ENCODE measurements at regions of chr18 and their contacts with region 1.

Region 1: GRCh38 chr18:77000527-77000926 is 132.1 kb downstream of the MBP start:
- DNase-seq: peak; percentile 71
- H3K4me3 ChIP-seq: no peak overlapping the region
- H3K27ac ChIP-seq: peak overlapping the region in 1 of 2 donors; percentile 32
- H3K4me1 ChIP-seq: no peaks in the 10 kb centered on the region
- H3K27me3 ChIP-seq: no peaks in the 10 kb centered on the region
- CTCF ChIP-seq: peak; percentile 88 to 96 (median 95)
- POLR2A ChIP-seq: no peak

Region 2: GRCh38 chr18:76783759-76784484 is 216.6 kb before region 1 on chr18:
- intact Hi-C with region 1: no loop called
- DNase-seq: no peak
- H3K4me3 ChIP-seq: no peak overlapping the region
- H3K27ac ChIP-seq: no peak overlapping the region
- H3K4me1 ChIP-seq: no peaks in the 10 kb centered on the region
- H3K27me3 ChIP-seq: no peaks in the 10 kb centered on the region
- CTCF ChIP-seq: no peak
- POLR2A ChIP-seq: no peak

Region 3: DNA sequence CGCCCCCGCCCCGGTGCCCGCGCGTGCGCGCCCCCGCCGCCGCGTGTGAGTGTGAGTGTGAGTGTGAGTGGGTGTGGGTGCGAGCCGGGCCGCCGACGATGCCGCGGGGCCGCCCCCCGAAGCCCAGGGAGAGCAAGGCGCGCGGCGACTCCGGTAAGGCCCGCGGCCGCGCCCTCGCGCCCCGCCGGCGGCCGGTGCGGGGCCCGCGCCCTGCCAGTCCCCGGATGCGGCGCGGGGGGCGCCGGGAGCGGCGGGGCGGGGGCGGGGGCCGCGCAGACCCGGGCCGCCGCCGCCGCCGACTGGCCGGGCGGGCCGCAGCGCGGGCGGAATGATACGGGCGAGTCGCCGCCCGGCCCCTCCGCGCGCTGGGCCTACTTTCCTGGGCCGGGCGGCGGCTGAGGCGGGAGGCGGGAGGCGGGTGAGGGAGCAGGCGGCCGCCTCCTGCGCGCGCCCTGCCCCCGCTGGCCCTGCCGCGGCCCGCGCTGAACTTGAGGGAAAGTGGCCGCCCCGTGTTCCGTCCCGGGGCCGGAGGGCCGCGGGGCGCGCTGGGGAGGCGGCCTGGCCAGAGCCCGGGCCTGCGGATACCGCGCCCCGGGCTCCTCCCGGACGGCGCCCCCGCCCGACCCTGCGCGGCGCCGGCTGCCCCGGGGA is 177.9 kb before region 1 on chr18 and contains the start of gene ZNF236:
- intact Hi-C with region 1: no loop called
- DNase-seq: peak; percentile 71
- H3K4me3 ChIP-seq: peak within 1 kb of the TSS; percentile 87 to 90
- H3K27ac ChIP-seq: peak within 1 kb of the TSS; percentile 93 to 96
- H3K4me1 ChIP-seq: peaks cover 28% of the 10 kb centered on the region
- H3K27me3 ChIP-seq: no peaks in the 10 kb centered on the region
- CTCF ChIP-seq: no peak
- POLR2A ChIP-seq: no peak
- total RNA-seq, gene ZNF236: 53.9 to 58.2 TPM

Region 4: GRCh38 chr18:77054606-77055428 is 54.3 kb after region 1 on chr18:
- intact Hi-C with region 1: loop called (anchors 10 kb)
- DNase-seq: peak; percentile 94
- H3K4me3 ChIP-seq: no peak overlapping the region
- H3K27ac ChIP-seq: peak overlapping the region; percentile 90
- H3K4me1 ChIP-seq: peaks cover 46% of the 10 kb centered on the region
- H3K27me3 ChIP-seq: no peaks in the 10 kb centered on the region
- CTCF ChIP-seq: peak; percentile 51 to 76 (median 74)
- POLR2A ChIP-seq: no peak

Region 5: GRCh38 chr18:77210249-77210648 is 209.7 kb after region 1 on chr18:
- intact Hi-C with region 1: loop called (anchors 5 kb)
- DNase-seq: no peak
- H3K4me3 ChIP-seq: no peak overlapping the region
- H3K27ac ChIP-seq: no peak overlapping the region
- H3K4me1 ChIP-seq: peaks cover 13% of the 10 kb centered on the region
- H3K27me3 ChIP-seq: no peaks in the 10 kb centered on the region
- CTCF ChIP-seq: no peak
- POLR2A ChIP-seq: no peak

Measured in testis (tissue), 5 donors.